CD4-positive, alpha-beta memory T cell (primary cell): ENCODE measurements at regions of chr9 and their contacts with region 1.

Region 1: DNA sequence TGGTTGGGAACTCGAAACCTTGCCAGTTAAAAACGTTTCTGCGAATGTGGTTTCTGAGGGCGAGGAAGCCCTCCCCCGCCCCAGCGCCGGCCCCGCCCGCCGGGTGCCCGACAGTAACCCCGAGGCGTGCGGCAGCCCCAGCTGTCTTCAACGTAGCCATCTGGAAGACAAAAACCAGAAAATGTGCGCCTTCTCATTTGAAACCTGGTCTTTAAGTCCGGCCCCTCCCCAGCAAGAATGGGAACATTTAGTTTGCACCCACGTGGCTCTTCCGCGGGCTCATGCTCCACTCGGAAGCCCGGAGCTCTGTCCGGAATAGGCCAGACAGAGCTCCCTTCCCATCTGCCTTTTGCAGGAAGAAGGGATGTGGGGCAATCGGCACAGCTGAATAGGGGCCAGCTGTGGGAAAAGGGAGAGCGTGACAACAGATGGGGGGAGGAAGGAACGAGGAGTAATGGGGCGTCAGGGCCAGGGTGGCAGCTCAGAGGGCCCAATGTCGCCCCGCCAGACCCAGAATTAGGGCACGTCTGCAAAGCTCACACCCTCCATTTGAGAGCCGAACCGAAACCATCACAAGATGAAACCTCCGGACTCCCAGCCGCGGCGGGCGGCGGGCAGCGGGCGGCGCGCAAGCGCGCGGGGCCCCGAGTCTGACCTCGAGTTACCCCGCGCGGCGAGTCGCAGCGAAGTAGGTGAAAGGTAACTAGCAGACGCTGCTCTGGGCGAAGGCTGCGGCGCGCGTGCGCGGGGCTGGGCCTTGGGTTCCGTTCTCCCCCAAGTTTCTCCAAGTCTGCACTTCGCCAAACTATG is 63.4 kb upstream of the ABCA1 start:
- DNase-seq: peak; percentile 85 to 88 (median 88)
- H3K4me3 ChIP-seq: peak overlapping the region; percentile 94 to 98
- H3K4me3 Mint-ChIP-seq: peak overlapping the region; percentile 87 to 94 (median 92)
- H3K27ac ChIP-seq: peak overlapping the region; percentile 76
- H3K27ac Mint-ChIP-seq: peak overlapping the region; percentile 96 to 99 (median 98)
- H3K4me1 ChIP-seq: peaks cover 38% of the 10 kb centered on the region
- H3K4me1 Mint-ChIP-seq: peaks cover 21 to 45% (median 33%) of the 10 kb centered on the region in 4 donors
- H3K27me3 ChIP-seq: no peaks in the 10 kb centered on the region
- H3K27me3 Mint-ChIP-seq: peaks cover 0 to 1% of the 10 kb centered on the region in 2 donors

Region 2: GRCh38 chr9:104927912-104928740 is 63.2 kb before region 1 on chr9 and contains the start of gene ABCA1:
- CTCF ChIA-PET with region 1: no interaction called
- POLR2A ChIA-PET with region 1: interaction called, 4 read pairs
- intact Hi-C with region 1: loop called (anchors 2 kb)
- DNase-seq: peak; percentile 56 to 83 (median 65)
- H3K4me3 ChIP-seq: peak within 1 kb of the TSS; percentile 62 to 69
- H3K4me3 Mint-ChIP-seq: peak within 1 kb of the TSS; percentile 90 to 94 (median 91)
- H3K27ac ChIP-seq: no peak within 1 kb of the TSS
- H3K27ac Mint-ChIP-seq: peak within 1 kb of the TSS in 6 of 7 donors; percentile 60 to 92 (median 80)
- H3K4me1 ChIP-seq: peaks cover 23% of the 10 kb centered on the region
- H3K4me1 Mint-ChIP-seq: peaks cover 4 to 19% (median 10%) of the 10 kb centered on the region in 4 donors
- H3K27me3 ChIP-seq: no peaks in the 10 kb centered on the region
- H3K27me3 Mint-ChIP-seq: peaks cover 0 to 14% of the 10 kb centered on the region in 2 donors
- total RNA-seq, gene ABCA1: 0.80 to 1.2 TPM

Region 3: DNA sequence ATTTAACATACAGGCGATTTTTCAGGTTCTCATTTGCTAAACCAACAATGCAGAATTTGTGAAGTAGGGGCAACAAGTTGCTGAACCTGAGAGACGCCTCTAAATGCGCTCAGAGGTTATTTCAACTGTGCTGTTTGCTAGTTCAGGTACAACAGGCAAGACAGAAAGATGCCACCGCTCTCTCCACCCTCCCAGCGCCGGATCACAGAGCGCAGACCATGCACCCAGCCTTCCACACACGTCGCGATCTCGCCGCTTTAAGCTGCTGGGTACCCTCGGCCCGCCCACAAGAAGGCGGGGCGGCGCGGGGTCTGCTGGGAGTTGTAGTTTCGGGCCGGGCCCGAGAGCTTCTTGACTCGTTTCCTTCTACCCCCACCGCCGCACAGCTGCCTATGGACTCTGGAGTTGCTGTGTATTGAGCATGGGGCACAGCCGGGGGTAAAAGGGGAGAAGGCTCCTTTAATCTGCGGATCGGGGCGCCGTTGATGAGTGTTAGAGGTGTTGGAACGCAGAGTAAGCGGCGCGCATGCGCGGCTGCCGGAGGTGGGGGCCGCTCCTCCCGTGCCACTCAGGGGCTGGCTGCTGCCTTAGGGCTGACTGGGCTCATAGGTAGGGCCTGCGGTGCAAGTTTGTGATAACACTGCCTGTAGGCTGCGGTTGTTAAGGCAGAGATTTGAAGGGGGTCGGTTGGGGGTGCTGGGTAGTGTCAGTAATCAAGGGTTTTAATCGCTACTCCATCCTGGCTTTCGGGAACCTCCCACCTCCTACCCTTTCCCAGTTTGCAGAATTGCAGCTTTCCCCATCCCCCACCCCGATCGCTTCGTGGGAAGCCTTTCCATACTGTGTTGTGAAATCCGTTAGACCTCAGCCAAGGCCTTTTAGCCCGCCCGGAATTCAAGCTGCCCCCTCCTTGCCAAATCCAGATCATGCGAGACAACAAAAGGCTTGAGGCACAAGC is 23.0 kb before region 1 on chr9:
- CTCF ChIA-PET with region 1: interaction called, 8 read pairs
- POLR2A ChIA-PET with region 1: interaction called, 6 read pairs
- intact Hi-C with region 1: loop called (anchors 2 kb)
- DNase-seq: peak; percentile 87 to 91 (median 89)
- H3K4me3 ChIP-seq: peak overlapping the region; percentile 78 to 88
- H3K4me3 Mint-ChIP-seq: peak overlapping the region; percentile 89 to 96 (median 94)
- H3K27ac ChIP-seq: peak overlapping the region; percentile 58
- H3K27ac Mint-ChIP-seq: peak overlapping the region; percentile 73 to 95 (median 90)
- H3K4me1 ChIP-seq: peaks cover 14% of the 10 kb centered on the region
- H3K4me1 Mint-ChIP-seq: peaks cover 2 to 17% (median 11%) of the 10 kb centered on the region in 4 donors
- H3K27me3 ChIP-seq: no peaks in the 10 kb centered on the region
- H3K27me3 Mint-ChIP-seq: peaks cover 6 to 13% of the 10 kb centered on the region in 2 donors

Region 4: DNA sequence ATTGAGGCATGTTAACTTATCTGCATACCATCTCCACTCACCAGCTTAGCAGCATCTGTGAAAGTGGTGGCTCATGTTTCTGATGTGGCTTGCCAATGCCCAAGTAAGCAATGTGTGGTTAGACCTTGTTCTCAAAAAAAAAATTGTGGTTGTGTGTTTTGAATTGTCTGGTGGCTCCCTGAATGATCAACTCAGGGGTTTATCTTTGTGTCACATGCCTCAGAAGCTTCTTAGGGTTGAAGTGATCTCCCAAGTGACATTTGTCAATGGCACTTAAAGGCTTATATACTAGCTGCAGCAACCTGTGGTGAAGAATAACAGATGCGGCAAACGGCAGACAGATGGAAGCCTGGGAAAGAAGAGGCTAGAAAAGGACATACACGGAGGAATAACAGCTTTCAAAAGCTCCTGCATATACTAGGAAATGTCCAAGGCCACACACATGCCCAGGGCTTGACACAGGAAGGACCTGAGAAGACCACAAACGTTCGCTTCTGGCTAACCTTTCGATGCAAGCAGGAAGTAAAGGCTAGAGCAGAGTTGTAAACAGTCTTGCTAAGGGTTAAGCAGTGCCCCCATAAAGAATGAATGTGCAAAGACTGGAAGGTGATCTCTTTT is 414.3 kb after region 1 on chr9:
- CTCF ChIA-PET with region 1: no interaction called
- POLR2A ChIA-PET with region 1: no interaction called
- intact Hi-C with region 1: loop called (anchors 2 kb)
- DNase-seq: peak; percentile 73 to 88 (median 86)
- H3K4me3 ChIP-seq: no peak overlapping the region
- H3K4me3 Mint-ChIP-seq: peak overlapping the region; percentile 26 to 82 (median 62)
- H3K27ac ChIP-seq: no peak overlapping the region
- H3K27ac Mint-ChIP-seq: peak overlapping the region in 6 of 7 donors; percentile 38 to 94 (median 88)
- H3K4me1 ChIP-seq: peaks cover 22% of the 10 kb centered on the region
- H3K4me1 Mint-ChIP-seq: peaks cover 29 to 32% (median 29%) of the 10 kb centered on the region in 4 donors
- H3K27me3 ChIP-seq: peaks cover 32% of the 10 kb centered on the region
- H3K27me3 Mint-ChIP-seq: peaks cover 48 to 54% of the 10 kb centered on the region in 2 donors